ENCODE measurements at regions of chr20 and their contacts with region 1.

Region 1: GRCh38 chr20:58890518-58891085 is 38.1 kb downstream of the GNAS start:
- DNase-seq: peak; percentile 83
- ATAC-seq: peak; percentile 73

Region 2: DNA sequence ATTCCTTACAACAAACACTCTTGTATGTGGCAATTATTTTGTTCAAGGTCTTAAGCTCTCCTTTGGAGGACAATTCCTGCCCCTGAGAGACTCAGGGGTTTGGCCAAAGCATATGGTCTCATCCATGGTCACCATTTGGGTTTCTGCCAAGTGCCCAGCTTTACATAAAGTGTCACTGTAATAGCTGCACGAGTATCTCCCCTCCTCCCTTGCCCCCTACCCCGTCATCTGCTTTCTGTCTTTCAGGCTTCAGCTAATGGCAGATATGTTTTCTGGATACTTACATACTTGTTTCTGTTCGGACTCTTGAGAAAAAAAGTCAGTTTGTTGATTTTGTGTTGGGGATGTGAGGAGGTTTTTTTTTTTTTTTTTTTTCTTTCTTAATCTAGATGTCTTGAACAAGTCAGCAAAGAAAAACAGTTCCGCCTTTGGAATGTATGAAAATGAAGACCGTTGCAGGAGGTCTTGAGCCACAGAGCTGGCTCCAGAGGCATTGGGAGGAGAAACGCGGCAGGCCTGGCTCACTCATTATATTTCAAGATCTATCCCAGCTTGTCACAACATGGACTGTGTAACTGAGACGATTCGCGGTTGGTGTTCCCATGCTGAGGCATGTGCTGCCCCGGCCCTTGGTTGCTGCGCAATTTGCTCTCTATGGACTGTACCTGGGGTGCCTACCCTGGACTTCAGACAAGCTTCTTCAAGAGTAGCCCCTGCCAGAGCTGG is 272.1 kb before region 1 on chr20:
- intact Hi-C with region 1: no loop called
- DNase-seq: peak; percentile 50
- ATAC-seq: peak; percentile 63

Region 3: GRCh38 chr20:58778760-58779159 is 111.8 kb before region 1 on chr20:
- intact Hi-C with region 1: no loop called
- DNase-seq: no peak
- ATAC-seq: no peak

Region 4: DNA sequence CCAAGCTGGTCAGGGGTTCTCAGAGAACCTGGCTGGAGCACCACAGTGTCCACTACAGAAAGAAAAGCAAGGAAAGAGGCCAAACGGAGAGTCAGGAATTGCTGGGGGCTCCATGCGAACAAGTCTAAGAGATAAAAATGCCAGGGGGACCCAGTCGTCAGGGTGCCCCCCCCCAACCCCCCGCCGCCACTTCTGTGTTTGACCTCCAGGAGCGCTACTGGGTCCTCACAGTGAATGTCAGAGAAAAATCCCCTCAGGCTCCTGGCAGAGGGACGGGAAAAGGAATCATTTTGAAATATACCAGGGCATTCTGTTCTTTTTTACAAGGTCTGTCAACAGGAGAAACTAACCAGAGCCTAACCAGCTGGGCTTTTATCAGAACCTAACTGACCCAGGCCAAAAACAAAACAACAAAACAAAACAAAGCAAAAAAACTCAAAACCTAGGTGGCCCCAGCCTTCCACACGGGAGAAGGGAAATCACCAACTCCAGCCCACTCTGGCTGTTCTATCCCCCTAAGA is 72.5 kb after region 1 on chr20:
- intact Hi-C with region 1: no loop called
- DNase-seq: no peak
- ATAC-seq: no peak

Region 5: GRCh38 chr20:58980700-58981627 is 90.4 kb after region 1 on chr20 and contains the start of gene NELFCD:
- intact Hi-C with region 1: loop called (anchors 5 kb)
- DNase-seq: peak; percentile 94
- ATAC-seq: peak; percentile 96
- total RNA-seq, gene NELFCD: 29.0 TPM

Region 6: GRCh38 chr20:59042796-59043660 is 152.4 kb after region 1 on chr20:
- intact Hi-C with region 1: loop called (anchors 5 kb)
- DNase-seq: peak; percentile 97
- ATAC-seq: peak; percentile 99

Measured in Right ventricle myocardium superior (tissue), 1 donor.